Naive thymus-derived CD4-positive, alpha-beta T cell (primary cell): ENCODE measurements at regions of chr7 and their contacts with region 1.

Region 1: GRCh38 chr7:79912213-79912633 is 222.4 kb upstream of the GNAI1 start:
- DNase-seq: peak in 6 of 9 donors; percentile 19 to 42 (median 28)
- ATAC-seq: no peak
- H3K4me3 ChIP-seq: peak overlapping the region; percentile 10
- H3K4me3 Mint-ChIP-seq: peak overlapping the region in 9 of 10 donors; percentile 51 to 77 (median 69)
- H3K27ac ChIP-seq: peak overlapping the region; percentile 38
- H3K27ac Mint-ChIP-seq: peak overlapping the region; percentile 32 to 88 (median 67)
- H3K4me1 ChIP-seq: peaks cover 0 to 29% of the 10 kb centered on the region in 2 donors
- H3K4me1 Mint-ChIP-seq: peaks cover 3 to 73% (median 64%) of the 10 kb centered on the region in 7 donors
- H3K27me3 ChIP-seq: no peaks in the 10 kb centered on the region
- H3K27me3 Mint-ChIP-seq: no peaks in the 10 kb centered on the region

Region 2: GRCh38 chr7:79298145-79298760 is 614.0 kb before region 1 on chr7:
- CTCF ChIA-PET with region 1: interaction called, 6 read pairs
- POLR2A ChIA-PET with region 1: no interaction called
- intact Hi-C with region 1: loop called in 1 of 2 experiments (anchors 1 kb)
- DNase-seq: no peak
- ATAC-seq: no peak
- H3K4me3 ChIP-seq: no peak overlapping the region
- H3K4me3 Mint-ChIP-seq: no peak overlapping the region
- H3K27ac ChIP-seq: no peak overlapping the region
- H3K27ac Mint-ChIP-seq: no peak overlapping the region
- H3K4me1 ChIP-seq: no peaks in the 10 kb centered on the region
- H3K4me1 Mint-ChIP-seq: no peaks in the 10 kb centered on the region
- H3K27me3 ChIP-seq: no peaks in the 10 kb centered on the region
- H3K27me3 Mint-ChIP-seq: no peaks in the 10 kb centered on the region

Region 3: DNA sequence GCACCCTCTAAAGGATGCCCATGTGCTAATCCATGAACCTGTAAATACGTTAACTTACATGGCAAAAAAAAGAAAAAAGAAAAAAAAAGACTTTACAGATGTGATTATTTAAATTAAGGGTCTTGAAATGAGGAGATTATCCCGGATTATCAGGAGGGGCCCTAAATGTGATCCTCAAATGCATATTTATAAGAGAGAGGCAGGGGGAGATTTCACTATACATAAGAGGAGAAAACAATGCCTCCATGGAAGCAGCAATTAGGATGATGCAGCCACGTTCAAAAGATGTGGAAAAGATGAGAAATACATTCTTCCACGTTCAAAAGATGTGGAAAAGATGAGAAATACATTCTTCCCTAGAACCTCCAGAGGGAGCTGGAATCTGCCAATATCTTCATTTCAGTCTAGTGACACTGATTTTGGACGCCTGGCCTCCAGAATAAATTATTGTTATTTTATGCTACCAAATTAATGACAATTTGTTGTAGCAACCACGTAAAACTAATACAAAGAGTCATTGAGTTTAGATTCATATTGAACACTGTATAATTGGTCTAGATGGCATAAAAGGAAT is 106.0 kb before region 1 on chr7:
- CTCF ChIA-PET with region 1: interaction called, 3 read pairs
- POLR2A ChIA-PET with region 1: no interaction called
- intact Hi-C with region 1: loop called in 1 of 2 experiments (anchors 5 kb)
- DNase-seq: no peak
- ATAC-seq: no peak
- H3K4me3 ChIP-seq: no peak overlapping the region
- H3K4me3 Mint-ChIP-seq: no peak overlapping the region
- H3K27ac ChIP-seq: no peak overlapping the region
- H3K27ac Mint-ChIP-seq: no peak overlapping the region
- H3K4me1 ChIP-seq: no peaks in the 10 kb centered on the region
- H3K4me1 Mint-ChIP-seq: no peaks in the 10 kb centered on the region
- H3K27me3 ChIP-seq: no peaks in the 10 kb centered on the region
- H3K27me3 Mint-ChIP-seq: no peaks in the 10 kb centered on the region

Region 4: DNA sequence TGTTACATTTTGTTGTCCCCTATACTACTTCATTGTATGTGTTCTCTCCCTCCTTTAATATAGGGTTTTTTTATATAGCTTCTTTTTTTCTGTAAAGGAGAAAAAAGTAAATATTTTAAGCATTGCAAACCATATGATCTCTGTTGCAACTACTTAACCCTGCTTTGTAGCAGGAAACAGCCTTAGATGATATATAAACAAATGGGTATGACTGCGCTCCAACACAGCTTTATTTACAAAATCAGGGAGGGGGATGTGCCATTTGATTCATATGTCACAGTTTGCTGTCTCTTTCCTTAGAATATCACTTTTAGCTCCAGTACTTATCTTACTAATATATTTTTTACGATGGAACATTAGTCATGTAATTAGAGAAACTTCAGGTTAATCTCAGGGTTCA is 67.2 kb after region 1 on chr7:
- CTCF ChIA-PET with region 1: no interaction called
- POLR2A ChIA-PET with region 1: no interaction called
- intact Hi-C with region 1: loop called in 1 of 2 experiments (anchors 1 kb)
- DNase-seq: no peak
- ATAC-seq: no peak
- H3K4me3 ChIP-seq: no peak overlapping the region
- H3K4me3 Mint-ChIP-seq: no peak overlapping the region
- H3K27ac ChIP-seq: no peak overlapping the region
- H3K27ac Mint-ChIP-seq: no peak overlapping the region
- H3K4me1 ChIP-seq: no peaks in the 10 kb centered on the region
- H3K4me1 Mint-ChIP-seq: peaks cover 0 to 17% (median 9%) of the 10 kb centered on the region in 7 donors
- H3K27me3 ChIP-seq: no peaks in the 10 kb centered on the region
- H3K27me3 Mint-ChIP-seq: no peaks in the 10 kb centered on the region